ENCODE measurements at regions of chr16 and their contacts with region 1.

Region 1: GRCh38 chr16:2720719-2721633 is 952 bp upstream of the PRSS27 start:
- DNase-seq: peak; percentile 91
- H3K4me3 ChIP-seq: peak overlapping the region; percentile 72
- H3K27ac ChIP-seq: peak overlapping the region; percentile 39
- H3K4me1 ChIP-seq: peaks cover 6% of the 10 kb centered on the region
- CTCF ChIP-seq: peak; percentile 56; the same call in 1 of the 2 replicates

Region 2: DNA sequence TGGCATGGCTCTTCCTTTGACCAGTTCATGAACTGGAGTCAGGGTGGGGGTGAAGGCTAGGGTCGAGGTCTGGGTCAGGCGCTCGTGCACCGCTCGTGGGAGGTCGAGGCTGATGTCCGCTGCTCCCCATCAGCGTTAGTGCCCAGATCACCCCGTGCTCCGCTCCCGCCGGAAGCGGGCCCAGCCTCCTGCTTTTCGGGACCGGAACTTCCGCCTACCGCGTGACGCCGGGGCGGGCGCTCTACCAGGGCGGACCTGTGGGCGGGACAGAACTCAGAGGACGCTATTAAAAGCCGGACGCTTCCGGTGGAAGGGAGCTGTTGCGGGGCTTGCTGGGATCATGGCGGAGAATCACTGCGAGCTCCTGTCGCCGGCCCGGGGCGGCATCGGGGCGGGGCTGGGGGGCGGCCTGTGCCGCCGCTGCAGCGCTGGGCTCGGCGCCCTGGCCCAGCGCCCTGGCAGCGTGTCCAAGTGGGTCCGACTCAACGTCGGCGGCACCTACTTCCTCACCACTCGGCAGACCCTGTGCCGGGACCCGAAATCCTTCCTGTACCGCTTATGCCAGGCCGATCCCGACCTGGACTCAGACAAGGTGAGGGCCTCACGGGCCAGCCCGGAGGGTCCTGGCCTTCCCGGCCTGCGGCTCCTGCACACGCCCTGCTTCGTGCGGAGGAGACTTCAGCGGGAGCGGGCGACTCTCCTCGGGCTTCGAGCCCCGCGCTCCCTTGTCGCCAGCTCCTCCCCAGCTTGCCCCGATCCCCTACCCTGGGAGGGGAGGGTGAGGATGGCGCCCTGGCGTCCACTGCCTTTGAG is 38.6 kb before region 1 on chr16 and contains the start of gene KCTD5:
- CTCF ChIA-PET with region 1: no interaction called
- POLR2A ChIA-PET with region 1: no interaction called
- intact Hi-C with region 1: loop called (anchors 2 kb)
- DNase-seq: peak; percentile 97
- H3K4me3 ChIP-seq: peak within 1 kb of the TSS; percentile 90
- H3K27ac ChIP-seq: peak within 1 kb of the TSS; percentile 43
- H3K4me1 ChIP-seq: peaks cover 16% of the 10 kb centered on the region
- CTCF ChIP-seq: no peak
- total RNA-seq, gene KCTD5: 18.9 and 34.6 TPM in 2 replicates

Region 3: DNA sequence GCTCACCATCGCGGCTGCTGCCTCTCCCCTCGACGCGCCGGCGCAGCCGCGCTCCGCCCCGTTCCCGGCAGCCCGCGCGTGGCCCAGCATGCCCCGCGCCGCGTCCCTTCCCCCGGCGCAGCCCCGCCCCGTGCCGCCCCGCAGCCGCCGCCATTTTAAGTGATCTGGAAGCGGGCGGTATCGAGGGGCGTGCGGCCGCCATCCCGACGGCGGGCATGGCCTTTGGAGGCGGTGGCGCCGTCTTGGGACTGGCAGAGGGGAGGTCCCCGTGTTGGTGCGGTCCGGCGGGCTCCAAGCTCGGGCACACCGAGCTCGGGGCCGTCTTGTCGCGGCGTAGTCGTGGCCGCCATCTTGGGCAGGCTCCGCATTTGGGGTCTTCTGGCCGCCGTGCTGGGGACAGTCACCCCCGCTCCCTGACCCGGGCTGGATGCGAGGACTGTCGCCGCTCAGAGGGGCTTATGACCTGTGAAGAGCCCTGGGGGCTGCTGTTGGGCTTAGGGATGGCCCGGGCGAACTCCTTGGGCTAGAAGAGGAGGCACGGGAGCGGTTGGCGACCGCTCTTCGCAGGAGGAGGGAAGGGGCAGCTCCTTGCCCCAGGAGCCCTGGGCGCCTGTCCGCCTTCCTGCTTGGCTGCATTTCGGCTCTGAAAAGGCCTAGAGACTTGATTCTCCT is 56.4 kb after region 1 on chr16 and contains the start of gene ELOB:
- CTCF ChIA-PET with region 1: no interaction called
- POLR2A ChIA-PET with region 1: no interaction called
- intact Hi-C with region 1: loop called (anchors 1 kb)
- DNase-seq: peak; percentile 89
- H3K4me3 ChIP-seq: peak within 1 kb of the TSS; percentile 89
- H3K27ac ChIP-seq: peak within 1 kb of the TSS; percentile 60
- H3K4me1 ChIP-seq: peaks cover 18% of the 10 kb centered on the region
- CTCF ChIP-seq: no peak
- total RNA-seq, gene ELOB: 282 and 285 TPM in 2 replicates

Measured in OCI-LY7 (cell line).